ENCODE measurements at regions of chr9 and their contacts with region 1.

Region 1: DNA sequence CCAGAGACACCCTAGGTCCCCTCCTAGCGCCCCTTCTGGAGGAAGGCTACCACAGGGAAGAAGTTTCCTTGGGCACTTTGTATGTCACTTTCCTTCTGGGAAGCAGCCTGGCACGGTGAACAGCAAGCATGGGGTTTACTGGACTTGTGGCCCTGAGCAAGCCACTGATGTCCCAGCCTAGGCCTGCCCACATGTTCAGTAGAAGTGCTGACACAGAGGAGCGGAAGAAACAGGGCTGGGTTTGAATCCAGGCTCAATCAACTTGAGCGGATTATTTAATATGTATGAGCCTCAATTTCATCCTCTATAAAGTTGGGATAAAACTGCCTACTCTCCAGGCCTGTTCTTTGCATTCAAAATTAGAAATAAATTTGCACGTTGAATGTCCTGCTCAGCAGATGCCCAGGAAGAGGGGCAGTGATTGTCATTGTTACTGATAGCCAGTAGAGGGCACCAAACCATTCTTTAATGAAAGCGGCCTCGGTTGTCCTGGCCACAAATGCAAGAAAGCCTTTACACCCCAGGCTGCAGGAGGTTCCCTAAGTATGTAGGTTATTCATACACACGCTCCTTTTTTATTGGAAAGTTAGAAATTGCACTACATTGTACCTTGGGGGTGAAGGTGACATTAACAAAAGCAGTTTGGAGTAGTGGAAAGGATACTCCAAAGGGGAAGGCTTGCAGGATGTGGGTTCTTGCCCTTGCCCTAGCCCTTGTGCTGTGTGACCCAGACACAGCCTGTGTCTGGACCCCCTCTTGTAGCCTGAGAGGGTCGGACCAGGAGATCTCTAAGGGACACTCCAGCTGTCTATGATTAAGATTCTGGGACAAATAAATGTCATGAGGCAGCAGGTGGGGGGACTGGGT is 13.4 kb upstream of the XPA start:
- DNase-seq: peak; percentile 75 to 80 (median 78)
- ATAC-seq: peak; percentile 95
- H3K4me3 ChIP-seq: no peak overlapping the region
- H3K27ac ChIP-seq: no peak overlapping the region
- H3K4me1 ChIP-seq: peaks cover 0 to 7% of the 10 kb centered on the region in 2 experiments; a peak in 3 of 5 replicates
- H3K27me3 ChIP-seq: peaks cover 0 to 5% of the 10 kb centered on the region in 2 experiments; a peak in 1 of 5 replicates
- CTCF ChIP-seq: peak; percentile 75 to 87 (median 85)
- EP300 ChIP-seq: no peak
- POLR2A ChIP-seq: no peak
- RAD21 ChIP-seq: peak; percentile 84 to 92

Region 2: GRCh38 chr9:97900738-97901565 is 190.4 kb after region 1 on chr9:
- CTCF ChIA-PET with region 1: interaction called, 9 read pairs
- POLR2A ChIA-PET with region 1: no interaction called
- in situ Hi-C with region 1: no loop called
- intact Hi-C with region 1: loop called (anchors 1 kb)
- DNase-seq: peak; percentile 61 to 66 (median 61)
- ATAC-seq: peak; percentile 86
- H3K4me3 ChIP-seq: no peak overlapping the region
- H3K27ac ChIP-seq: no peak overlapping the region
- H3K4me1 ChIP-seq: no peaks in the 10 kb centered on the region; a peak in 1 of 5 replicates
- H3K27me3 ChIP-seq: no peaks in the 10 kb centered on the region
- CTCF ChIP-seq: peak; percentile 54 to 80 (median 72)
- EP300 ChIP-seq: no peak
- POLR2A ChIP-seq: no peak
- RAD21 ChIP-seq: peak; percentile 59 to 69